K562 (cell line): ENCODE measurements at regions of chr1 and their contacts with region 1.

Region 1: DNA sequence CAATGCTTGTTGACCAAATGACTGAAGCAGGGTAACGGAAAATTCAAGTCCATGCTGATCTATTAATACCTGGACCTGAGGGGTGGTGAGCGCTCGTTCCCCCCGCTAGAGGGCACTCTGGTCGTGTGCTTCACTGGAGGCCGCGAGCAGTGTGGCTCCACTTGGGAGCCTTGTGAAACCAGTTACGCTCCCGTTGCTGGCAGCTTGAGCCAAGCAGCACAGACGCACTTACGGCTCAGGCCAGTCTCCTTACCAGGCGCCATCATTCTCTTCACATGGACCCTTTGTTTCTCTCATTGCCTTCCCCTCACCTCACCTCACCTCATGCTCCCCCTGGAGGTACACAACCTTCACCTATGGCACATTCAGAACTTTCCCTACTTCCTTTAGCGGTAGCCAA is 49.7 kb upstream of the TSPAN2 start:
- DNase-seq: peak; percentile 82 to 86 (median 83)
- ATAC-seq: peak; percentile 99
- H3K4me3 ChIP-seq: no peak overlapping the region
- H3K27ac ChIP-seq: no peak overlapping the region
- H3K4me1 ChIP-seq: peaks cover 0 to 2% of the 10 kb centered on the region in 2 experiments; a peak in 1 of 5 replicates
- H3K27me3 ChIP-seq: no peaks in the 10 kb centered on the region; a peak in 1 of 5 replicates
- CTCF ChIP-seq: peak; percentile 91 to 98 (median 92)
- EP300 ChIP-seq: no peak
- POLR2A ChIP-seq: no peak
- RAD21 ChIP-seq: peak; percentile 88 to 93

Region 2: GRCh38 chr1:115183721-115184259 is 44.8 kb after region 1 on chr1:
- CTCF ChIA-PET with region 1: no interaction called
- POLR2A ChIA-PET with region 1: no interaction called
- in situ Hi-C with region 1: no loop called
- intact Hi-C with region 1: loop called (anchors 2 kb)
- DNase-seq: no peak
- ATAC-seq: no peak
- H3K4me3 ChIP-seq: no peak overlapping the region
- H3K27ac ChIP-seq: no peak overlapping the region
- H3K4me1 ChIP-seq: peaks cover 4 to 6% of the 10 kb centered on the region in 2 experiments; a peak in 3 of 5 replicates
- H3K27me3 ChIP-seq: no peaks in the 10 kb centered on the region; a peak in 1 of 5 replicates
- CTCF ChIP-seq: no peak
- EP300 ChIP-seq: no peak
- POLR2A ChIP-seq: no peak
- RAD21 ChIP-seq: no peak

Region 3: GRCh38 chr1:115595279-115596079 is 456.5 kb after region 1 on chr1:
- CTCF ChIA-PET with region 1: interaction called, 9 read pairs
- POLR2A ChIA-PET with region 1: no interaction called
- in situ Hi-C with region 1: loop called (anchors 5 kb)
- intact Hi-C with region 1: loop called (anchors 1 kb)
- DNase-seq: peak; percentile 75 to 82 (median 78)
- ATAC-seq: peak; percentile 100
- H3K4me3 ChIP-seq: no peak overlapping the region
- H3K27ac ChIP-seq: no peak overlapping the region
- H3K4me1 ChIP-seq: no peaks in the 10 kb centered on the region
- H3K27me3 ChIP-seq: no peaks in the 10 kb centered on the region
- CTCF ChIP-seq: peak; percentile 88 to 93 (median 93)
- EP300 ChIP-seq: no peak
- POLR2A ChIP-seq: no peak
- RAD21 ChIP-seq: peak; percentile 83 to 91

Region 4: GRCh38 chr1:115771847-115772457 is 633.0 kb after region 1 on chr1:
- CTCF ChIA-PET with region 1: no interaction called
- POLR2A ChIA-PET with region 1: no interaction called
- in situ Hi-C with region 1: loop called (anchors 25 kb)
- intact Hi-C with region 1: loop called (anchors 1 kb)
- DNase-seq: peak; percentile 66 to 78 (median 70)
- ATAC-seq: peak; percentile 97
- H3K4me3 ChIP-seq: no peak overlapping the region
- H3K27ac ChIP-seq: no peak overlapping the region
- H3K4me1 ChIP-seq: no peaks in the 10 kb centered on the region
- H3K27me3 ChIP-seq: peaks cover 7 to 16% of the 10 kb centered on the region in 2 experiments; a peak in 4 of 5 replicates
- CTCF ChIP-seq: peak; percentile 82 to 92 (median 84)
- EP300 ChIP-seq: no peak
- POLR2A ChIP-seq: no peak
- RAD21 ChIP-seq: peak; percentile 94 to 97